ENCODE measurements at regions of chr3 and their contacts with region 1.

Region 1: GRCh38 chr3:107235928-107236315 is 141.3 kb upstream of the CCDC54 start:
- DNase-seq: peak in 2 of 4 donors; percentile 77 to 88
- ATAC-seq: peak; percentile 92
- H3K4me3 ChIP-seq: peak overlapping the region; percentile 23 to 33
- H3K27ac ChIP-seq: peak overlapping the region in 1 of 2 donors; percentile 68
- H3K4me1 ChIP-seq: peaks cover 0 to 9% of the 10 kb centered on the region in 2 donors
- H3K27me3 ChIP-seq: no peaks in the 10 kb centered on the region
- CTCF ChIP-seq: peak; percentile 68 to 87

Region 2: GRCh38 chr3:107098864-107099263 is 137.1 kb before region 1 on chr3:
- intact Hi-C with region 1: no loop called
- DNase-seq: no peak
- ATAC-seq: no peak
- H3K4me3 ChIP-seq: no peak overlapping the region
- H3K27ac ChIP-seq: no peak overlapping the region
- H3K4me1 ChIP-seq: no peaks in the 10 kb centered on the region
- H3K27me3 ChIP-seq: no peaks in the 10 kb centered on the region
- CTCF ChIP-seq: no peak

Region 3: GRCh38 chr3:107346564-107346963 is 110.6 kb after region 1 on chr3:
- intact Hi-C with region 1: no loop called
- DNase-seq: no peak
- ATAC-seq: no peak
- H3K4me3 ChIP-seq: no peak overlapping the region
- H3K27ac ChIP-seq: no peak overlapping the region
- H3K4me1 ChIP-seq: no peaks in the 10 kb centered on the region
- H3K27me3 ChIP-seq: no peaks in the 10 kb centered on the region
- CTCF ChIP-seq: no peak

Region 4: GRCh38 chr3:108477511-108478147 is 1241.7 kb after region 1 on chr3:
- intact Hi-C with region 1: loop called in 1 of 2 experiments (anchors 10 kb)
- DNase-seq: peak in 3 of 4 donors; percentile 37 to 71 (median 43)
- ATAC-seq: peak; percentile 97
- H3K4me3 ChIP-seq: no peak overlapping the region
- H3K27ac ChIP-seq: no peak overlapping the region
- H3K4me1 ChIP-seq: no peaks in the 10 kb centered on the region
- H3K27me3 ChIP-seq: no peaks in the 10 kb centered on the region
- CTCF ChIP-seq: peak; percentile 60 to 70

Measured in left lung (tissue), 14 donors.